IMR-90 (cell line): ENCODE measurements at regions of chr4 and their contacts with region 1.

Region 1: DNA sequence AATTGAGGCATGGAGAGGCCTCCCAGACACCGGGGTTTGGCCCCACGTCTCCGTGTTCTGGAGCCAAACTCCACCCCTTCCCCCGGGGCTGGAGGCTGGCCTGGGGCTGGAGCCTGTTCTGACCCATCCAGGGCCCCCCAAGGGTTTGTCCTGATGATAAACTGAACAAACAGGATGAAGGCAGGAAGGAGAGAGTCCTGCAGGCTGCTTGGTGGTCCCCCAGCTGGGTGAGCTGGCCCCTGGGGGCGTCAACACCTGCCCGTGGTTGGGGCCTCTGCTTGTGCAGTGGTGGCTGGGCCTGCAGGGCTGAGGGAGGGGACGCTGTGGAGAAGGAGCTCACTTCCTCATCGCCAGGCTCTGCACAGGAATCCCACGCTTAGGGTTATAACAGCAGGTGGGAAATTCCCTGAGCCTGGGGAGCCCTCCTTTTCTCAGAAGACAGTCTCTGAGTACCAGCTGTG is 2.3 kb downstream of the SH3TC1 start:
- DNase-seq: no peak
- ATAC-seq: no peak
- H3K4me3 ChIP-seq: no peak overlapping the region
- H3K27ac ChIP-seq: no peak overlapping the region
- H3K4me1 ChIP-seq: peaks cover 17% of the 10 kb centered on the region
- H3K27me3 ChIP-seq: peaks cover 1% of the 10 kb centered on the region; the same call in 1 of the 2 replicates
- CTCF ChIP-seq: no peak
- POLR2A ChIP-seq: no peak
- RAD21 ChIP-seq: no peak

Region 2: GRCh38 chr4:8459867-8460447 is 258.6 kb after region 1 on chr4:
- CTCF ChIA-PET with region 1: no interaction called
- POLR2A ChIA-PET with region 1: no interaction called
- dilution Hi-C with region 1: no loop called
- in situ Hi-C with region 1: no loop called
- intact Hi-C with region 1: no loop called
- DNase-seq: no peak
- ATAC-seq: peak; percentile 83
- H3K4me3 ChIP-seq: no peak overlapping the region
- H3K27ac ChIP-seq: no peak overlapping the region
- H3K4me1 ChIP-seq: no peaks in the 10 kb centered on the region
- H3K27me3 ChIP-seq: no peaks in the 10 kb centered on the region
- CTCF ChIP-seq: no peak
- POLR2A ChIP-seq: no peak
- RAD21 ChIP-seq: no peak

Region 3: DNA sequence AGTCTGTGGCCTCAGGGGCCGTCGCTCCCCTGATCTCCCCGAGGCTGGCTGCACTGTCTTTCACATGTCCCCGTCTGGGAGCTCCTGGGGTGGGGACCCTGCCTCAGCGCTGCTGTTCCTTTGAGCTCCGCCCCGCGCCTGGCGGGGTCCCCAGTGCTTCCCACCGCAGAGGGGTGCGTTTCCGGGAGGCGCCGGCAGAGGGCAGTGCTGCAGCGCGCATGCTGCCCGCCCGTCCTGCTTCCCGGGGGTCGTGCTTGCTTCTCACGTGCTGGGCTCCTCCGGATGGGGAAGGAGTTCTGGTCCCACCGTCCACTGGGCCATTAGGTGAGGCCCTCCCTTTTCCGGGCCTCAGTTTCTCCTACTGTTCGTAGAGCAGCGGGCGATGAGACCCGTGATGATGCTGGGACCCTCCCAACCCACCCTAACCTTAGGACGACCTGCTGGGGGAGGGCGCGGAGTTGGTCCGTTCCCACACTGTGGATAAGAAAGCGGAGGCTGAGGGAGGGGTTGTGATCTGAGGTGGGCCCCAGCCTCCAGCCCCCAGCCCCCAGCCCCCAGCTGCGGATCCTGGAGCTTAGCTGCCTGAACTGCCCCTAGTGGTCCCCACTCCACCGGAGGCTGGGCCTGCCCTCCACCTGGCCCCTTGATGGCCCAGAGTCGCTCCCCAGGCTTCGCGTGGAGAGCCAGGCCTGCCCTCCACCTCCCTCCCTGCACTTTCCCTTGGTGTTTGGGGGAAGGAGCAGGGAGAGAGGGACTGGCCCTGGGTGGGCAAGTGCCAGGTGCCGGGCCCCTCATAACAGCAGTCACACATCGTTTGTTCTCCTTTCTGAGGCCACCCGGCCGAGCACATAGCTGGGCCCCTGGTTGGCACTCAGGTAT is 406.5 kb after region 1 on chr4:
- CTCF ChIA-PET with region 1: no interaction called
- POLR2A ChIA-PET with region 1: no interaction called
- dilution Hi-C with region 1: no loop called
- in situ Hi-C with region 1: loop called (anchors 25 kb)
- intact Hi-C with region 1: no loop called
- DNase-seq: no peak
- ATAC-seq: peak; percentile 88
- H3K4me3 ChIP-seq: no peak overlapping the region
- H3K27ac ChIP-seq: no peak overlapping the region
- H3K4me1 ChIP-seq: no peaks in the 10 kb centered on the region
- H3K27me3 ChIP-seq: no peaks in the 10 kb centered on the region; the same call in 1 of the 2 replicates
- CTCF ChIP-seq: peak; percentile 74
- POLR2A ChIP-seq: no peak
- RAD21 ChIP-seq: peak; percentile 66